ENCODE measurements at regions of chr4 and their contacts with region 1.

Region 1: GRCh38 chr4:164731827-164732474 is 22.0 kb upstream of the SMIM31 start:
- DNase-seq: peak; percentile 3
- ATAC-seq: peak; percentile 85
- H3K4me3 ChIP-seq: no peak overlapping the region
- H3K27ac ChIP-seq: no peak overlapping the region
- H3K4me1 ChIP-seq: no peaks in the 10 kb centered on the region
- H3K27me3 ChIP-seq: no peaks in the 10 kb centered on the region; a peak in 1 of 4 replicates
- CTCF ChIP-seq: peak; percentile 82 to 88 (median 82)
- EP300 ChIP-seq: no peak
- POLR2A ChIP-seq: no peak
- RAD21 ChIP-seq: peak; percentile 92

Region 2: DNA sequence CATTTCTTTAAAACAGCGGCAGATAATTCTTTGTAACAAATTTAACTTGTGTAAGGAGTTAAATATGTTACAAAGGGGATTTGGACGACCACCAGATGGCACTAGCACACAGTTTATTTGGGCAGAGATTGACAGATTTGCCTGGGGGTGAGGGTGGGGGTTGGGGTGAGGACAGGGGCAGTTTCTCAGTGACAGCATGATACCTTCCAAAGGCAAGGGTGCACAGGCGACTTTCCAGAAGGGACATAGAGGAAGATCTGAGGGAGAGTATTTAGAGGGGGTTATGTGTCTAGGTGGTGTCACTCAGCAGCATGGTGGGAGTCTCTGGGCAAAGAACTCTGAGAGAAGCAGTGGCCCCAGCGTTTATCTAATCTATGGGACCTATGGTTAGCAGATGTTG is 1247.0 kb before region 1 on chr4:
- CTCF ChIA-PET with region 1: no interaction called
- POLR2A ChIA-PET with region 1: no interaction called
- RAD21 ChIA-PET with region 1: no interaction called
- SMC1A ChIA-PET with region 1: no interaction called
- in situ Hi-C with region 1: no loop called
- intact Hi-C with region 1: loop called (anchors 5 kb)
- DNase-seq: no peak
- ATAC-seq: peak; percentile 87
- H3K4me3 ChIP-seq: no peak overlapping the region
- H3K27ac ChIP-seq: no peak overlapping the region
- H3K4me1 ChIP-seq: peaks cover 12% of the 10 kb centered on the region; the same call in 1 of the 2 replicates
- H3K27me3 ChIP-seq: no peaks in the 10 kb centered on the region
- CTCF ChIP-seq: peak; percentile 55 to 73 (median 59); a peak in 5 of 6 replicates
- EP300 ChIP-seq: no peak
- POLR2A ChIP-seq: no peak
- RAD21 ChIP-seq: peak; percentile 91

Region 3: GRCh38 chr4:164337219-164337944 is 394.6 kb before region 1 on chr4:
- CTCF ChIA-PET with region 1: no interaction called
- POLR2A ChIA-PET with region 1: no interaction called
- RAD21 ChIA-PET with region 1: no interaction called
- SMC1A ChIA-PET with region 1: no interaction called
- in situ Hi-C with region 1: no loop called
- intact Hi-C with region 1: no loop called
- DNase-seq: no peak
- ATAC-seq: no peak
- H3K4me3 ChIP-seq: no peak overlapping the region
- H3K27ac ChIP-seq: no peak overlapping the region
- H3K4me1 ChIP-seq: no peaks in the 10 kb centered on the region
- H3K27me3 ChIP-seq: no peaks in the 10 kb centered on the region
- CTCF ChIP-seq: no peak
- EP300 ChIP-seq: no peak
- POLR2A ChIP-seq: no peak
- RAD21 ChIP-seq: no peak

Region 4: DNA sequence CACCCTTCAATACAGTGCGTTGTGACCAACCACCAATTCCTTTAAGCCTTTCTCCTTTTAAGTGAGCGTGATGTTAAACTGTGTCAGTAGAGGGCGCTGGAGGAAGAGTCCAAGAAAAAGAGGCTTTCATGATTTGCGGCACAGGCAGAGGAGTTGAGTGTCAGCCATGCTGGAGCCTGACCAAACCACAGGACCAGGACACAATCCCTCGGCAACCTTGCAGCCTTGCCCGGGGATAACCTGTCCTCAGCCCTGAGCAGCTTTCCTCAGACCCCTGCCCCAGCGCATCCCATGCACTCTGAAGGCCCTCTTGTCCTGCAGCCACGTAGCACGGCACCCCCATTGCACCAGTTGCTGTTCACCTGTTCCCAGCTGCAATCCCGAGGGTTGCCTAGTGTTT is 31.5 kb before region 1 on chr4:
- CTCF ChIA-PET with region 1: interaction called, 15 read pairs
- POLR2A ChIA-PET with region 1: no interaction called
- RAD21 ChIA-PET with region 1: no interaction called
- SMC1A ChIA-PET with region 1: interaction called, 3 read pairs
- in situ Hi-C with region 1: no loop called
- intact Hi-C with region 1: no loop called
- DNase-seq: no peak
- ATAC-seq: peak; percentile 65
- H3K4me3 ChIP-seq: no peak overlapping the region
- H3K27ac ChIP-seq: no peak overlapping the region
- H3K4me1 ChIP-seq: no peaks in the 10 kb centered on the region
- H3K27me3 ChIP-seq: no peaks in the 10 kb centered on the region
- CTCF ChIP-seq: peak; percentile 29 to 44 (median 42); a peak in 5 of 6 replicates
- EP300 ChIP-seq: no peak
- POLR2A ChIP-seq: no peak
- RAD21 ChIP-seq: 0 out of 2 replicates have a peak, but pooled peaks have one; percentile 21

Region 5: GRCh38 chr4:164716901-164717300 is 15.1 kb before region 1 on chr4:
- CTCF ChIA-PET with region 1: interaction called, 16 read pairs
- POLR2A ChIA-PET with region 1: interaction called, 3 read pairs
- RAD21 ChIA-PET with region 1: interaction called, 3 read pairs
- SMC1A ChIA-PET with region 1: interaction called, 3 read pairs
- in situ Hi-C with region 1: no loop called
- intact Hi-C with region 1: no loop called
- DNase-seq: no peak
- ATAC-seq: peak; percentile 83
- H3K4me3 ChIP-seq: no peak overlapping the region
- H3K27ac ChIP-seq: no peak overlapping the region
- H3K4me1 ChIP-seq: no peaks in the 10 kb centered on the region
- H3K27me3 ChIP-seq: no peaks in the 10 kb centered on the region
- CTCF ChIP-seq: peak; percentile 24 to 35 (median 32); a peak in 4 of 6 replicates
- EP300 ChIP-seq: no peak
- POLR2A ChIP-seq: no peak
- RAD21 ChIP-seq: no peak

Region 6: GRCh38 chr4:164748375-164748774 is 16.4 kb after region 1 on chr4:
- CTCF ChIA-PET with region 1: interaction called, 15 read pairs
- POLR2A ChIA-PET with region 1: no interaction called
- RAD21 ChIA-PET with region 1: no interaction called
- SMC1A ChIA-PET with region 1: interaction called, 5 read pairs
- in situ Hi-C with region 1: no loop called
- intact Hi-C with region 1: no loop called
- DNase-seq: no peak
- ATAC-seq: no peak
- H3K4me3 ChIP-seq: no peak overlapping the region
- H3K27ac ChIP-seq: no peak overlapping the region
- H3K4me1 ChIP-seq: no peaks in the 10 kb centered on the region
- H3K27me3 ChIP-seq: no peaks in the 10 kb centered on the region
- CTCF ChIP-seq: peak in 1 of 3 experiments; percentile 36; a peak in 2 of 6 replicates
- EP300 ChIP-seq: no peak
- POLR2A ChIP-seq: no peak
- RAD21 ChIP-seq: peak; percentile 23; the same call in 1 of the 2 replicates

Region 7: DNA sequence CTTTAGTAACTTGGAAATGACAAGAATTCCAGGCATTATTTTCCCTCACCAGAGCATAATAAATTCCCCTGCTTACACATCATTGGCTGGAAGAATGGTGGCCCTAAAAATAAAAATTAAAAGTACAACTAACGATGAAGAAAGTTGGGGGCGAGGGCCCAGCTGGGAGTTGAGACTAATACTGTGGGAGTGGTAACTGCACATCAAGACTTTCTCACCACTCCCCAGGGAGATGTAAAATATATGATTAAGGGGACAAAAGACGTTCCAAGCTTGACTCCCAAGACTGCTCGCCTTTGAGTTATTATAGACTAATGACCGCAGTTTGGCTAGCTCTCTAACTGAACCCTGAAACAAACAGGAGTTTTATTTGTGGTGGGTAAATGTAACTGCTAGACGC is 52.0 kb after region 1 on chr4:
- CTCF ChIA-PET with region 1: no interaction called
- POLR2A ChIA-PET with region 1: no interaction called
- RAD21 ChIA-PET with region 1: no interaction called
- SMC1A ChIA-PET with region 1: no interaction called
- in situ Hi-C with region 1: no loop called
- intact Hi-C with region 1: no loop called
- DNase-seq: no peak
- ATAC-seq: no peak
- H3K4me3 ChIP-seq: no peak overlapping the region
- H3K27ac ChIP-seq: no peak overlapping the region
- H3K4me1 ChIP-seq: no peaks in the 10 kb centered on the region
- H3K27me3 ChIP-seq: no peaks in the 10 kb centered on the region
- CTCF ChIP-seq: no peak
- EP300 ChIP-seq: no peak
- POLR2A ChIP-seq: no peak
- RAD21 ChIP-seq: no peak